Left cardiac atrium (tissue), 4 donors: ENCODE measurements at regions of chr14 and their contacts with region 1.

Region 1: GRCh38 chr14:51283402-51284085 is 43.5 kb downstream of the TMX1 start:
- DNase-seq: no peak
- ATAC-seq: peak; percentile 88 to 90

Region 2: GRCh38 chr14:51442513-51443175 is 159.1 kb after region 1 on chr14:
- intact Hi-C with region 1: no loop called
- DNase-seq: no peak
- ATAC-seq: peak; percentile 73 to 95

Region 3: DNA sequence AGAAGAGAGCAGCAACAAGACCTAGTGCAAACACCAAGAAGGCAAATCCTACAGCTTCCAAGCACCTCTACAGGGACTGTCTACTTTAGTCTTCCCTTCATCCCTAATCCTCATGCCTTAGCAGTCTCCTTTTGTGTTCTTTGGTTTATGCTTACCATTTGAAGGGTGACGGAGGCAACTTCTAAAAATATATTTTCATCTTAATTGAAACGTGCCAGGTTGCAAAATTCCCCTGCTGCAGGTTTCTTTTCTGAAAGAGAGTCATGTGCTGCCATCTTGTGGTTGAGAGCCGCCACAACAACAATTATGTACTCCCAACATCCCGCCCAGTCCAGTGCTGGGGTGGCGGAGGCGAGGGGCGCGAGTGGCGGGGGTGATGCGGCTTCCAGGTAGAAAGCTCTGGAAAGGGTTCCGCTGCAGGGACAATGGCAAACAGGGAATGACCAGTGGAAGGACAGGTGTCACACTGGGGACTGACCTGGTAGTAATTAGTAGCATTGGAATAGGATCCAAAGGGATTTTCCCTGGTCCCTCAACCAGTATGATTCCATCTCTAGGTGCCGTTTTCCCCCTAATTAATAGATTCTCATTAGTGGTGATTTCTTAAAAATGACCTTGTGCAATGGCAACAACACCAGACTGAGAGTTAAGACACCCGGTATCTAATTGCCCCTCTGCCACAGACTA is 496.6 kb after region 1 on chr14:
- intact Hi-C with region 1: loop called (anchors 5 to 10 kb)
- DNase-seq: peak; percentile 73
- ATAC-seq: peak; percentile 61 to 71